Panc1 (cell line): ENCODE measurements at regions of chr20 and their contacts with region 1.

Region 1: DNA sequence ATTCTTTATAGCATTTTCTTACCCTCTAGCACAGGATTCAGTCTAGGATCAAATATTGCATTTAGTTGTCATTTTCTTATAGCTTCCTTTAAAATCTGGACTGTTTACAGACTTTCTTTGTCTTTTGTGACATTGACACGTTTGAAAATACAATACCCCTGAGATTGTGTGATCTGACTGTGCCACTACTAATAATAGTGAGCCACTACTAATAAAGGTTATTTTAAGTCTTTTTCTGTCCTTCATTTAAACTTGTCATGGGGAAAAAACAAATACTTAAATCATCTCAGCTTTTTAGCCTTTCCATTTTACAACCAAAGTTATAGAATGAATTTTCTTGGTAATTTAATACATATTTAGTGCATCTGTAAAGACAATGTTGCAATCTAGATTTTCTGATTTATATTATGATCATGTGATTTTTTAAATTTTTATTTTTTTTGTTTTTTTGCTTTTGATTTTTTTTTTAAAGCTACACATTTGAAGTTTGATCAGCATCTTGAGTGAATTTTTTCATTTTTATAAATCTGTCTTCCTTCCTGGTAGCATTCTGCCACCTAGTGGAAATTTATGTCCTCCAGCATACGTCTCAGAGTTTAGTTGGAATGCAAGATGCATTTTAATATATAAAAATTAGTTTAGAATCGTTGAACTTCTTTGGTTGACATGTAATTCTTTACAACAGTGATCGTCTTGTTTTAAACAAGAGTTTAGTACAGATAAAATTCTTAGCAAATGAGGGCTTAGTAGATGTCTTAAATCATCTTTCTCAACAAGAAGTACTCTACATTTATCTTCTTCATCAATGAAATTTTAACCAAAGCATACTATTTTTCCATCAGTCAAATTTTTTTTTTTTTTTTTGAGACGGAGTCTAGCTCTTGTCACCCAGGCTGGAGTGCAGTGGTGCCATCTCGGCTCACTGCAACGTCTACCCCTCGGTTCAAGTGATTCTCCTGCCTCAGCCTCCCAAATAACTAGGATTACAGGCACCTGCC is 119.4 kb downstream of the NCOA3 start:
- DNase-seq: peak; percentile 35
- ATAC-seq: no peak
- H3K4me3 ChIP-seq: no peak overlapping the region
- H3K27ac ChIP-seq: no peak overlapping the region
- H3K4me1 ChIP-seq: peaks cover 10% of the 10 kb centered on the region; the same call in 1 of the 2 replicates
- H3K27me3 ChIP-seq: no peaks in the 10 kb centered on the region
- CTCF ChIP-seq: peak; percentile 85; the same call in 1 of the 2 replicates

Region 2: GRCh38 chr20:47205577-47206498 is 415.3 kb before region 1 on chr20:
- CTCF ChIA-PET with region 1: no interaction called
- POLR2A ChIA-PET with region 1: no interaction called
- in situ Hi-C with region 1: no loop called
- intact Hi-C with region 1: loop called (anchors 10 kb)
- DNase-seq: no peak
- ATAC-seq: peak; percentile 81
- H3K4me3 ChIP-seq: no peak overlapping the region
- H3K27ac ChIP-seq: 0 out of 2 replicates have a peak overlapping the region, but pooled peaks have one; percentile 6
- H3K4me1 ChIP-seq: 0 out of 2 replicates have a peak, but pooled peaks cover 4% of the 10 kb centered on the region
- H3K27me3 ChIP-seq: no peaks in the 10 kb centered on the region
- CTCF ChIP-seq: peak; percentile 83

Region 3: DNA sequence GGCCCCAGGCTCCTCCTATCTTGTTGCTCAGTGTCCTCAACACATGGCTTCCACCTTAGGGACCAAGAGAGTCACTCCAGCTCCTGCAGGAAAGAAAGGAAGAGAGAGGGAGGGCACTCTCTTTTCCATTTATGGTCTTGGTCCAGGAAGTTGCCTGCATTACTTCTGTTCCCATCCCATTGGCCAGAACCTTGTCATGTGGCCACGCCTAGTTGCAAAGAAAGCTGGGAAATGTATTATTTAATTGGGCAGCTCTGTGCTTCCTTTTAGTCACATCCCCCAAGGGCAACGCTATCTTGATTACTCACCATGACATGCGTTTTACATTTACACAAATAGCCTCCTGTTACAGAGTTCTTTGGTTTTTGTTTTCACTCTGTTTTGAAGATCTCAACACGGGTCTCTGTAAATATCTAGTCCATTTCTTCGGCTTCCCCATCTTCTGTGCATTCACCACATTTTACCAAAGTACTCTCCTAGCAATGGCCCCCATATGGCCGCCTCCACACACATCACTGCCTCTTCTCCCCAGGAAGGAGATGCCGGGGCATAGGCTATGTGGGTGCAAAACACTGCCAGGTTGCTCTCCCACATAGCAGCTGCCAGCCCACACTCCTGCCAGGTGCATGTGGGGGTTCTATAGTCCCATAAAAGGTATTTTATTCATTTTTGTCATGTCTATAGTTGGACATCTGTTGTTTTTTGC is 228.9 kb before region 1 on chr20:
- CTCF ChIA-PET with region 1: no interaction called
- POLR2A ChIA-PET with region 1: no interaction called
- in situ Hi-C with region 1: no loop called
- intact Hi-C with region 1: loop called (anchors 10 kb)
- DNase-seq: no peak
- ATAC-seq: peak; percentile 62
- H3K4me3 ChIP-seq: no peak overlapping the region
- H3K27ac ChIP-seq: peak overlapping the region; percentile 78
- H3K4me1 ChIP-seq: peaks cover 14% of the 10 kb centered on the region
- H3K27me3 ChIP-seq: no peaks in the 10 kb centered on the region
- CTCF ChIP-seq: no peak

Region 4: GRCh38 chr20:47501483-47502270 is 119.4 kb before region 1 on chr20 and contains the start of gene NCOA3:
- CTCF ChIA-PET with region 1: interaction called, 3 read pairs
- POLR2A ChIA-PET with region 1: no interaction called
- in situ Hi-C with region 1: no loop called
- intact Hi-C with region 1: loop called (anchors 10 kb)
- DNase-seq: peak; percentile 71
- ATAC-seq: peak; percentile 99
- H3K4me3 ChIP-seq: peak within 1 kb of the TSS; percentile 73 to 83
- H3K27ac ChIP-seq: peak within 1 kb of the TSS; percentile 98
- H3K4me1 ChIP-seq: peaks cover 27% of the 10 kb centered on the region
- H3K27me3 ChIP-seq: no peaks in the 10 kb centered on the region
- CTCF ChIP-seq: no peak; the same call in 1 of the 2 replicates
- total RNA-seq, gene NCOA3: 47.7 TPM